Tibial artery (tissue), 4 donors: ENCODE measurements at regions of chr12 and their contacts with region 1.

Region 1: GRCh38 chr12:59149997-59150642 is 229.8 kb upstream of the LRIG3 start:
- DNase-seq: no peak
- H3K4me3 ChIP-seq: no peak overlapping the region
- H3K27ac ChIP-seq: no peak overlapping the region
- H3K4me1 ChIP-seq: peaks cover 0 to 15% (median 4%) of the 10 kb centered on the region in 4 donors
- H3K27me3 ChIP-seq: no peaks in the 10 kb centered on the region
- CTCF ChIP-seq: peak; percentile 91 to 100

Region 2: GRCh38 chr12:58346032-58346632 is 804.0 kb before region 1 on chr12:
- intact Hi-C with region 1: loop called (anchors 10 kb)
- DNase-seq: no peak
- H3K4me3 ChIP-seq: no peak overlapping the region
- H3K27ac ChIP-seq: no peak overlapping the region
- H3K4me1 ChIP-seq: peaks cover 0 to 4% (median 0%) of the 10 kb centered on the region in 4 donors
- H3K27me3 ChIP-seq: no peaks in the 10 kb centered on the region
- CTCF ChIP-seq: peak; percentile 85 to 87

Region 3: GRCh38 chr12:58540480-58541299 is 609.4 kb before region 1 on chr12:
- intact Hi-C with region 1: loop called (anchors 5 kb)
- DNase-seq: peak; percentile 67 to 81
- H3K4me3 ChIP-seq: no peak overlapping the region
- H3K27ac ChIP-seq: peak overlapping the region; percentile 35 to 41
- H3K4me1 ChIP-seq: peaks cover 0 to 37% (median 13%) of the 10 kb centered on the region in 4 donors
- H3K27me3 ChIP-seq: no peaks in the 10 kb centered on the region
- CTCF ChIP-seq: peak; percentile 77 to 90

Region 4: DNA sequence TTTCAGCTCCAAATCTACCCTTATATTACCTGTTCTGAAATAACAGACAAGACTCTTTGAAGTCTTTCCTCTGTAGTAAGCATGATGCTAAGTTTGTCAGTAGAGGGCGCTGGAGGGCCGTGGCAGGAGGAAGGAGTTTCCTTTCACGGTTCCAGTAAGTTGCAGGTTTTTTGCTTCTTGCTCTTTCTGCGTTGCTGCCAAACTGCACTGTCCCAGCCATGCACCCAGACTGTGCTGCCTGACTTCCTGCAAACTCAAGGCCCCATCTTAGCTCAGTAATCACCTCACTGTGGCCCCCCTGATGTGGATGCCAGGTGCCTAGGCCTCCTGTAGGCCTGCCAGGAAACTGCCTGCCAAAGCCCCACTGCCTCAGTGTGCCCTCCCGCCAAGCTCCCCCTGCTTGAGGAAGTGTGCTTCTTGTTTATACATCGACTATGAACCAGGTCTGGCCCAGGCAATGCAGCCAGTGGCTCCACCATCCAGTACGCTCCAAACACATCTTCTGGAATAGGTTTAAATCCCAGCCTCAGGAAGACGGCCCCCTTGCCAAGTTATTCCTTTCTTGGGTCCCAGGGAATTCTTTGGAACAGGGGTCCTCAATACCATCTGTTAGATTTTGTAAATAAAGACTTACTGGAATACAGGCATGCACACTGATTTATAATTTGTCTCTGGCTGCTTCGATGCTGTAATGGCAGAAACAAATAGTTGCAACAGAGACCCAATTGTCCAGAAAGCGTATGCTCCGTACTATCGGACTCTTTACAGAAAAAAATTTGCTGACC is 36.1 kb before region 1 on chr12:
- intact Hi-C with region 1: loop called (anchors 5 kb)
- DNase-seq: peak; percentile 67 to 83
- H3K4me3 ChIP-seq: no peak overlapping the region
- H3K27ac ChIP-seq: no peak overlapping the region
- H3K4me1 ChIP-seq: peaks cover 0 to 9% (median 5%) of the 10 kb centered on the region in 4 donors
- H3K27me3 ChIP-seq: no peaks in the 10 kb centered on the region
- CTCF ChIP-seq: peak; percentile 89 to 92